HEK293 (cell line): ENCODE measurements at regions of chr15 and their contacts with region 1.

Region 1: GRCh38 chr15:87099916-87100315 is 1020.2 kb downstream of the AGBL1 start:
- H3K4me3 ChIP-seq: no peak overlapping the region
- H3K27ac ChIP-seq: no peak overlapping the region
- H3K4me1 ChIP-seq: no peaks in the 10 kb centered on the region
- CTCF ChIP-seq: no peak

Region 2: GRCh38 chr15:87144775-87145174 is 44.9 kb after region 1 on chr15:
- CTCF ChIA-PET with region 1: no interaction called
- POLR2A ChIA-PET with region 1: no interaction called
- H3K4me3 ChIP-seq: no peak overlapping the region
- H3K27ac ChIP-seq: no peak overlapping the region
- H3K4me1 ChIP-seq: no peaks in the 10 kb centered on the region
- CTCF ChIP-seq: no peak

Region 3: DNA sequence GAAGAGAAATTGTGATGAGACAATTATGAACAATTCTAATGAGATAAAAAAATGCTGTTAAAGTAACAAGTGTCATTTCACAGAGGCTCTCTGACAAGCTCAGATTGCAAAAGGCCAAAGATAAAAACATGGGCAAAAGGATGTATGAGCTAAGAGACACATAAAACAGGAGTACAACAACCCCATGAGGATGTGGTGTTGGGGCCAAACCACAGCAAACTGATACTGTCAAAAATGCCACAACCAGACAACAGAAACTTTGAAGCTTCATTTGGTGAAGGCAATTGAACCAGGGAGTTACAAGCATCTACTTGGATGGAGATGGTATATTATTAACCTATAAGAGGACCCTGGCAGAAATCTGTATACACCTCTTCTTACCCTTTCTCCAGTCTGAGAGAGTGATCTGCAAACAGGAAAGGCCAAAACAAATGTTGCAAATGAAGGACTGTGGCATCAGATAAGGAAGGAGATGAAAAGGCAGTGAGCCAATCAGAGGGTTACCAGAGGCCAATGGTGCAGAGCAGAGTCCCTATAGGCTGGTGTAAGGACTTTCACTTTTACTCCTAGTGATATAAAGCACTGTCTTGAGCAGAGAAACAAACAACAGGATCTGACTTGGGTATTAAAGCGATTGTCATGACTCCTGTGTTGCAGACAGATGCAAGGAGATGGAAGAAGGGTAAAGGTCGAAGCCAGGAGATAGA is 497.6 kb after region 1 on chr15:
- CTCF ChIA-PET with region 1: no interaction called
- POLR2A ChIA-PET with region 1: interaction called, 11 read pairs
- H3K4me3 ChIP-seq: no peak overlapping the region
- H3K27ac ChIP-seq: no peak overlapping the region
- H3K4me1 ChIP-seq: no peaks in the 10 kb centered on the region
- CTCF ChIP-seq: no peak